Dendritic cell treated with granulocyte-macrophage colony-stimulating factor and Interleukin-4, amounts not matched to agents 40 ng/mL and 50 ng/mL, for 4 days (primary cell): ENCODE measurements at regions of chr10 and their contacts with region 1.

Region 1: GRCh38 chr10:103859161-103860086 is 4.0 kb upstream of the SH3PXD2A start:
- H3K4me3 Mint-ChIP-seq: no peak overlapping the region
- H3K27ac Mint-ChIP-seq: peak overlapping the region; percentile 55
- H3K4me1 Mint-ChIP-seq: peaks cover 15% of the 10 kb centered on the region
- H3K27me3 Mint-ChIP-seq: peaks cover 30% of the 10 kb centered on the region

Region 2: DNA sequence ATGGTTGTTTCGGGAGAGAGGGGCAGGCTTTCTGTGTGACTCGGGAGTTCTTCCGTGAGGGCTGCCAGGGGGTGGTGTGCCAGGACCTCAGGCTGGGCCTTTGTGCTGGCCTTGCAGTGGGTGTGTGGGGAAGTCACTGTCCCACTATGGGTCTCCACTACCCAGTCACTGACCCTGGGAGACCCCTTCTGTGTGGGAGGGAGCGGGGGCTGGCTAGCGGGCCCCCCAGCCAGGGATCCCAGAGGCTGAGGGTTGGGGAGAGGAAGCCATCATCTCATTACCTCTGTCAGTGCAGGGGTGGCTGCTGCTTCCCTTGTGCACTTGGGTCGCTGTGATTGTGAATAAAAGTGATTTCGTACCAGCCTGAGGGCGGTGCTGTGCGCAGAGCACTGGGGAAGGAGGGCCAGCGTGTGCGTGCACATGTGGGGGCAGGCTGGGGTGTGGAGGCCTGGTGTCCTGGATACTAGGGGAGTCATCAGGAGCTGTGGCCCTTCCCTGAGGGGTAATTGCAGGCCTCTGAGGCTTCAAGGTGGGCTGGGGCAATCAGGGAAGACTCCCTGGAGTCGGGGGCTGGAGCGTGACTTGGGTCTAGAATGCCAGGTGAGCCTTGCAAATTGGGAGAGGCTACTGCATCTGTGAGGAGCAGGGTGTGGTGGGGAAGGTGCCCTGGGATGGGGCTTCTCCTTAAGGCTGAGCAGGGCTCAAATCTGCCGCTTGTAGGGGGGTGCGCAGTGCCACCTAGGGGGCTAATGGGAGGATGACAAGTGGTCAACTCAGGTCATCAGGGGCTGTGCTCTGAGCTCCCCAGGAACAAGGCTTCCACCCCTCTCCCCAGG is 267.0 kb before region 1 on chr10:
- intact Hi-C with region 1: loop called (anchors 10 kb)
- H3K4me3 Mint-ChIP-seq: no peak overlapping the region
- H3K27ac Mint-ChIP-seq: no peak overlapping the region
- H3K4me1 Mint-ChIP-seq: peaks cover 10% of the 10 kb centered on the region
- H3K27me3 Mint-ChIP-seq: peaks cover 7% of the 10 kb centered on the region

Region 3: DNA sequence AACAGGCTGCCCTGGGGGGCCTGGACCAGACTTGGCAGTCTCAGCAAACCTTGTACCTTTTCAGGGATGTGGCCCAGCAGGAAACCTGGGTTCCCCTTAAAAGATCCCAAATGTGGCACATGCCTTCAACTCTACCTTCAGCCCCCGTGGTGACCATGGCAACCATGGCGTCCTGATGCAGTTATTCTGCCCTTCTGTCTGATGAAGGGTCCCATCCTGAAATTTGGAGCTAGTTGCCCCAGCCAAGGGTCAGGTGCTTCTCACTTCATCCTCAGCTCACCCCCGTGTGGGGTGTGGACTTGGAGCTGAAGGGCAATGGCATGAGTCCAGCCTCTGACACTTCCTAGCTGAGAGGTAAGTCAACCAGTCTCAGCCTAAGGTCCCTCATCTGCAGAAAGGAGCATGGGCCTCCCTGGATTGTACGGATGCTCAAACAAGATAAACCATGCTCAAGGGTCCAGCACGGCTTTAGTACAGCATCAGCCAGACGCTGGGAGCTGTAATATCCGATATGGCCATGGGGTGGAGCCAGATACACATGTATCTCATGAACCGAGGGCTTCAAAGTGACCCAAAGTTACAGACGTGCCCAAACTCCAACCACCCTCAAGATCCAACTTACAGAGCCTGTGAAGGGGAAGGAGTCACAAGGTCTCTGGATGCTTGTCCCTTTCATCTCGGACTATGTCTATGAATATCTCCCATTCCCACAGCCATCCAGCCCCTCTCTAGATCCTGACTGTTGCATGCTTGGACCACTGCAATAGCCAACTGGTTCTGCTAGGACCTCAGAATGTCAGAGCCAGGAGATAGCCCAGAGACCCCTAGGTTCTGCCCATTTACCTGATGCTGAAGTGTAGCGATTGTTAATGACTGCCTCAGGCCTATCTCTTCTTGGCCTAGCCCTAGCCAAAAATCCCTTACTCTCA is 146.6 kb before region 1 on chr10:
- intact Hi-C with region 1: loop called (anchors 1 kb)
- H3K4me3 Mint-ChIP-seq: no peak overlapping the region
- H3K27ac Mint-ChIP-seq: no peak overlapping the region
- H3K4me1 Mint-ChIP-seq: no peaks in the 10 kb centered on the region
- H3K27me3 Mint-ChIP-seq: peaks cover 5% of the 10 kb centered on the region

Region 4: GRCh38 chr10:103881416-103882284 is 22.2 kb after region 1 on chr10:
- intact Hi-C with region 1: no loop called
- H3K4me3 Mint-ChIP-seq: no peak overlapping the region
- H3K27ac Mint-ChIP-seq: no peak overlapping the region
- H3K4me1 Mint-ChIP-seq: peaks cover 6% of the 10 kb centered on the region
- H3K27me3 Mint-ChIP-seq: no peaks in the 10 kb centered on the region

Region 5: DNA sequence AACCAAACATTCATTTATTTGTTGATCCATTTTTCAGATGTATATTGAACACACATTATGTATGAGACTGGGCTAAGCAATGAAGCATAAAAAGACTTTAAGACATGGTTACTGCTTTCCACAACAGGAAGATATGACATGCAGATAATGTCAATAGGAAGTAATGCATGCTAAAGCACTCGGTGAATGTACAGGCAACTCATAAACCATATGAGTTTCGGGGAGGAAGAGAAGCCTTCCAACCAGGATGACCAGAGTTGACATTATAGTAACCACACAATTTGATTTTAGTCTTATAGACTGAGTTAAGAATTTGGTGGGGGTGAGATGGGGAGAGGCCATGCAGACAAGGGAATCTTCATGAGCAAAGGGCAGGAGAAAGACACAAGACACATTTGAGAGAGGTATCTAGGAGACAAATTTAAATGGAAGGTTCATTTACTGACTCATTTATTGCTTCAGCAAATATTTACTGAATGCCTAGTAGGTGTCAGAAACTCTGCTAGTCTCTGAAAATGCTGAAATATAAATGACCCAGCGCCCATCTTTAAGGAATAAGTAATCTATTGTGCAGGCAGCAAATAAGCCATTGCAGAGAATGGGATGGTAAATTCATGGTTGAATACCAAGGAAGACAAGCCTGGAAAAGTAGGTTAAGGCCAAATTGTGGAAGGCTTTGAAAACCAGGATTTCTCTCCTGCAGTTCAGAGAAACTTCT is 88.5 kb after region 1 on chr10:
- intact Hi-C with region 1: no loop called
- H3K4me3 Mint-ChIP-seq: no peak overlapping the region
- H3K27ac Mint-ChIP-seq: no peak overlapping the region
- H3K4me1 Mint-ChIP-seq: peaks cover 3% of the 10 kb centered on the region
- H3K27me3 Mint-ChIP-seq: no peaks in the 10 kb centered on the region